ENCODE measurements at regions of chr9 and their contacts with region 1.

Region 1: GRCh38 chr9:127586537-127586936 is 25.5 kb upstream of the STXBP1 start:
- DNase-seq: peak; percentile 86 to 89
- H3K4me3 ChIP-seq: no peak overlapping the region
- H3K27ac ChIP-seq: no peak overlapping the region
- H3K4me1 ChIP-seq: peaks cover 3 to 14% of the 10 kb centered on the region in 2 donors
- H3K27me3 ChIP-seq: no peaks in the 10 kb centered on the region
- CTCF ChIP-seq: peak; percentile 81 to 96 (median 86)
- POLR2A ChIP-seq: no peak

Region 2: DNA sequence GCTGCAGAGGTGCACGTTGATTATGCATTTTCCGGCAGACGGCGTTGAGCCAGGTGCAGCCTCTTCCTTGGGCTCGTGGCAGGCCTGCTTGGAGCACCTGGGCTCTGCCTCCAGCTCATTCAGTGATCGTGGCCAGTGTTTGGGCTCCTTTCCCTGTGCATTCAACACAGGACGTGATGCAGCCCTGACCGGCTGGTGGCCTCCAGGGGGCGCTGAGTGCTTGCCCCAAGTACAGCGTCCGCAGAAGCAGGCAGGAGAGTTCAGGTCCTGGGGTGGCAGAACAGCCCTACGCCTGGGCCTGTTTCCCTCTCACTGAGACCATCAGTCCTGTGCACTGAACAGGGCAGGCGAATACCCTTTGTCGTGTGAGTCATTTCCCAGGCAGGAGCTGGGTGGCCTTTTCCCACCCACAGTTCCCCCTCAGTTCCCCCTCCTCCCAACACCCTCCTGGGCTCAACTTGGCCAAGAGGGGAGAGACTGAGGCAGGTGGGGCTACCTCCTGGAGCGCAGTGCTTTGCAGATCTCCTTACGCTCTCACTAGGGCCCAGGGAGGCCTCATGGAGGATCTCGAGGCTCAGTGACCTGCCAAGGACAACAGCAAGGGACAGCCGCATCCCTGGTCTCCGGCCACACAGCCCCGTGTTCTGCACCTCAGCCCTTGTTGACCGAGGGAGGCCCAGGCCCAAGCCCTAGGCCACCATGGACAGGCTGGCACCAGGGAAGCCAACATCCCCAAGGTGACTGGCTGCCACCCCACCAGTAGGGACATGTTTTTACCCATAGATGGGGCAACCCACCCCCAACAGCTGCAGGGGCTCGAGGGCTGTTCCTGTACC is 82.4 kb before region 1 on chr9:
- intact Hi-C with region 1: loop called (anchors 5 kb)
- DNase-seq: peak; percentile 77
- H3K4me3 ChIP-seq: no peak overlapping the region
- H3K27ac ChIP-seq: peak overlapping the region in 2 of 3 donors; percentile 5 to 49
- H3K4me1 ChIP-seq: no peaks in the 10 kb centered on the region
- H3K27me3 ChIP-seq: no peaks in the 10 kb centered on the region
- CTCF ChIP-seq: peak; percentile 47 to 85 (median 74)
- POLR2A ChIP-seq: no peak

Region 3: DNA sequence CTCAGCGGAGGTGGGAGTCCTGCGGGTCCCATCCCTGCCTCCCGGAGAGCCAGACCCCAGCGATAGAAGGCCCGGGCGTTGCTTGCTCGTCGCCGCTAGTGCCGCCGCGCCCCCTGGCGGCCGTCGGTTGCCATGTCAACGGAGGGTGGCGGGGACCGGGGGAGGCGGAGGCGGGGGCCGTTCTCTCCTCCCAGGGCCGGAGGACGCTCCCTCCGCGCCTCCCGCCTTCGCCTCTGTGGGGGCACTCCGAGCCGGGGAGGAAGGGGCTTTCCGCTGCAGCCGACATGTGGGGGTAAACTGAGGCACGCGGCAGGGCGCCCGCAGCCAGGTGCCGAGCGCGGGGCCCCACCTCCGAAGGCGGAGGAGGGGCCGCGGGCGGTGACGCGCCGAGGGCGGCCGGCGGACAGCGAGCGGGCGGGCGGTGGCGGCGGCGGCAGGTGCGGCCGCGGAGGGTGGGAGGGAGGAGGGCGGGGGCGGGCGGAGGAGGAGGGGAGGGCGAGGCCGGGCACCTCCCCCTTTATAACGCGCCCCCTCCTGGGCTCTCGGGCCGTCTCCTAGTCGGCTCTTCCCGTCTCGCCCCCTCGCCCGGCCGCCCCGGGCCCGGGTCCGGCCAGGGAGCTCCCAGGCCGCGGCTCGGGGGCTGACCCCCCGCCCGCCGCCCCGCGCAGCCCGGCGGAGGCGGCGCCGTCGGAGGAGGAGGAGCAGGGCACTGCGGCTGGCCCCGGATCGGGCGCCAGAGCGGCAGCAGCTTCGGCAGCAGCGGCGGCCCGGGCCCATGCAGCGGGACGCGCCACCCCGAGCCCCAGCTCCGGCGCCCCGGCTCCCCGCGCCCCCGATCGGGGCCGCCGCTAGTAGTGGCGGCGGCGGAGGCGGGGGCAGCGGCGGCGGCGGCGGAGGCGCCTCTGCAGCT is 198.7 kb after region 1 on chr9:
- intact Hi-C with region 1: loop called (anchors 5 kb)
- DNase-seq: peak; percentile 83 to 87
- H3K4me3 ChIP-seq: peak overlapping the region in 2 of 3 donors; percentile 68 to 91
- H3K27ac ChIP-seq: peak overlapping the region; percentile 87 to 92 (median 92)
- H3K4me1 ChIP-seq: peaks cover 8 to 34% of the 10 kb centered on the region in 2 donors
- H3K27me3 ChIP-seq: no peaks in the 10 kb centered on the region
- CTCF ChIP-seq: peak; percentile 72 to 95 (median 86)
- POLR2A ChIP-seq: no peak

Region 4: GRCh38 chr9:127916665-127917613 is 330.4 kb after region 1 on chr9 and contains the start of gene ST6GALNAC4:
- intact Hi-C with region 1: loop called (anchors 5 kb)
- DNase-seq: peak; percentile 94
- H3K4me3 ChIP-seq: peak within 1 kb of the TSS; percentile 12 to 61 (median 57)
- H3K27ac ChIP-seq: peak within 1 kb of the TSS in 2 of 3 donors; percentile 24 to 46
- H3K4me1 ChIP-seq: peaks cover 21 to 55% of the 10 kb centered on the region in 2 donors
- H3K27me3 ChIP-seq: no peaks in the 10 kb centered on the region
- CTCF ChIP-seq: no peak
- POLR2A ChIP-seq: peak in 1 of 2 donors; percentile 44
- total RNA-seq, gene ST6GALNAC4: 8.9 to 27.4 (median 19.1) TPM